Adrenal gland (tissue), 19 donors: ENCODE measurements at regions of chr10 and their contacts with region 1.

Region 1: GRCh38 chr10:16440396-16441133 is 3.8 kb downstream of the PTER start:
- DNase-seq: peak in 4 of 7 donors; percentile 24 to 42 (median 26)
- H3K4me3 ChIP-seq: no peak overlapping the region
- H3K27ac ChIP-seq: peak overlapping the region in 2 of 5 donors; percentile 76 to 77
- H3K4me1 ChIP-seq: peaks cover 7 to 39% of the 10 kb centered on the region in 2 donors
- H3K27me3 ChIP-seq: no peaks in the 10 kb centered on the region
- CTCF ChIP-seq: no peak
- POLR2A ChIP-seq: no peak

Region 2: GRCh38 chr10:16481052-16481728 is 40.6 kb after region 1 on chr10:
- intact Hi-C with region 1: no loop called
- DNase-seq: no peak
- H3K4me3 ChIP-seq: no peak overlapping the region
- H3K27ac ChIP-seq: no peak overlapping the region
- H3K4me1 ChIP-seq: no peaks in the 10 kb centered on the region
- H3K27me3 ChIP-seq: no peaks in the 10 kb centered on the region
- CTCF ChIP-seq: no peak
- POLR2A ChIP-seq: no peak

Region 3: GRCh38 chr10:16519908-16520861 is 79.6 kb after region 1 on chr10:
- intact Hi-C with region 1: loop called in 1 of 2 experiments (anchors 10 kb)
- DNase-seq: no peak
- H3K4me3 ChIP-seq: peak overlapping the region in 1 of 4 donors; percentile 68
- H3K27ac ChIP-seq: no peak overlapping the region
- H3K4me1 ChIP-seq: peaks cover 12 to 19% of the 10 kb centered on the region in 2 donors
- H3K27me3 ChIP-seq: peaks cover 19% of the 10 kb centered on the region
- CTCF ChIP-seq: no peak
- POLR2A ChIP-seq: no peak

Region 4: DNA sequence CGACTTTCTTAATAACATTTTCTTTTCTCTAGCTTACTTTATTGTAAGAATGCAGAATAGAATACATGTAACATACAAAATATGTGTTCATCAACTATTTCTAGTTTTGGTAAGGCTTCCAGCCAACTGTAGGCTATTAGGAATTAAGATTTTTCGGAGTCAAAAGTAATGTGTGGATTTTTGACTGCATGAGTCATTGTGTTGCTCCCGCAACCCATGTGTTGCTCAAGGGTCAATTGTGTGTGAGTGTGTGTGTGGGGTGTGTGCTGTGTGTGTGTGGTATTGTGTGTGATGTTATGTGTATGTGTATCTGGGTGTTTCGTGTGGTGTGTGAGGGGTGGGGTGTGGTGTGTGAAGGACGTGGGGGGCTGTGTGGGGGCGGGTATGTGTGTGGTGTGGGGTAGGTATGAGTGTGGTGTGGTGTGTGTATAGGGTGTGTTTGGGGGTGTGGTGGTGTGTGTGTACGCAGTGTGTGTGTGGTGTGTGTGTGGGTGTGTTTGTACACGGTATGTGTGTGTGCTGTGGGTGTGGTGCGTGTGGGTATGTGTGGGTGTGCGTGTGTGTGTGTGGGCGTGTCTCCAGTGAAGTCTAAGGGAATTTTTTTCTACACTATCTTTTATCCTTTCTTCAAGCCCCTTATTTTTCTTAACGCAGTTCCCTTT is 316.1 kb after region 1 on chr10:
- intact Hi-C with region 1: no loop called
- DNase-seq: no peak
- H3K4me3 ChIP-seq: no peak overlapping the region
- H3K27ac ChIP-seq: no peak overlapping the region
- H3K4me1 ChIP-seq: no peaks in the 10 kb centered on the region
- H3K27me3 ChIP-seq: no peaks in the 10 kb centered on the region
- CTCF ChIP-seq: no peak
- POLR2A ChIP-seq: no peak